CD4-positive, alpha-beta memory T cell (primary cell): ENCODE measurements at regions of chr9 and their contacts with region 1.

Region 1: DNA sequence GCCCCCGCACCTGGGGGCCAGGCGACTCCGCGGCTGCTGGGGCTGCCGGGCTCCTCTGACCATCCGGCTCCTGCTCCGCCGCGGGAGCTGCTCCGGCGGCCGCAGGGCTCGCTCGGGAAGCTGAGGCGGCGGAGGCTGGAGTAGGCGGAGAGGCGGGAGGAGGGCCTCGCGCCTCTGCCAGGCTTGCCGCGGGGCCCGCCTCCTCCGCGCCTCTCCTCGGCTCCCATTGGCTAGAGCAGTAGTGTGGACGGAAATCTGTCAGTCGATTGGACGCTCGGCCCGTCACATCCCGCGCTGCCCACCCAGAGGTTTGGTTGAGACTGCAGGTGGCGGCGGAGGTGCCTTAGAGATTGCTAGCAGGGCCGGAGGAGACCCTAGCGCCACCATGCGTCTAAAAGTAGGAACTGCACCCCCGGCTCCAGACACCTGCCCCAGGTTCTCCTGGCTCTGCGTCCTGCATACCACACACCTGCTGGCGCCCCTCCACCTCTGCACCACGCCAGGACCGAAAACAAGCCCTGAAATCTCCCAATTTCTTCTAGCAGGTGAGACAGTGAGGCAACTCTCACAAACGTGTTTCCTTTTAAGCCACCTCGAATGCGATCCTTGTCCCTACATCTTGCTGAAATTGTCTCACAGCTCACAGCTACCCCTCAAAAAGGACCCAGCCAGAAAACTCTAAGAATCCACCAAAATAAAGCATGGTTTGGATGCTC is at the start of gene SCAI:
- DNase-seq: peak; percentile 97 to 99 (median 99)
- H3K4me3 ChIP-seq: peak within 1 kb of the TSS in 1 of 2 donors; percentile 49
- H3K4me3 Mint-ChIP-seq: peak within 1 kb of the TSS; percentile 93 to 99 (median 98)
- H3K27ac ChIP-seq: peak within 1 kb of the TSS; percentile 16
- H3K27ac Mint-ChIP-seq: peak within 1 kb of the TSS; percentile 85 to 95 (median 91)
- H3K4me1 ChIP-seq: peaks cover 22% of the 10 kb centered on the region
- H3K4me1 Mint-ChIP-seq: peaks cover 17 to 34% (median 26%) of the 10 kb centered on the region in 4 donors
- H3K27me3 ChIP-seq: no peaks in the 10 kb centered on the region
- H3K27me3 Mint-ChIP-seq: no peaks in the 10 kb centered on the region
- total RNA-seq, gene SCAI: 14.7 to 15.5 TPM

Region 2: GRCh38 chr9:125024917-125025316 is 118.6 kb before region 1 on chr9:
- CTCF ChIA-PET with region 1: no interaction called
- POLR2A ChIA-PET with region 1: no interaction called
- intact Hi-C with region 1: loop called (anchors 10 kb)
- DNase-seq: no peak
- H3K4me3 ChIP-seq: no peak overlapping the region
- H3K4me3 Mint-ChIP-seq: no peak overlapping the region
- H3K27ac ChIP-seq: no peak overlapping the region
- H3K27ac Mint-ChIP-seq: peak overlapping the region in 1 of 7 donors; percentile 53
- H3K4me1 ChIP-seq: no peaks in the 10 kb centered on the region
- H3K4me1 Mint-ChIP-seq: no peaks in the 10 kb centered on the region
- H3K27me3 ChIP-seq: no peaks in the 10 kb centered on the region
- H3K27me3 Mint-ChIP-seq: no peaks in the 10 kb centered on the region

Region 3: DNA sequence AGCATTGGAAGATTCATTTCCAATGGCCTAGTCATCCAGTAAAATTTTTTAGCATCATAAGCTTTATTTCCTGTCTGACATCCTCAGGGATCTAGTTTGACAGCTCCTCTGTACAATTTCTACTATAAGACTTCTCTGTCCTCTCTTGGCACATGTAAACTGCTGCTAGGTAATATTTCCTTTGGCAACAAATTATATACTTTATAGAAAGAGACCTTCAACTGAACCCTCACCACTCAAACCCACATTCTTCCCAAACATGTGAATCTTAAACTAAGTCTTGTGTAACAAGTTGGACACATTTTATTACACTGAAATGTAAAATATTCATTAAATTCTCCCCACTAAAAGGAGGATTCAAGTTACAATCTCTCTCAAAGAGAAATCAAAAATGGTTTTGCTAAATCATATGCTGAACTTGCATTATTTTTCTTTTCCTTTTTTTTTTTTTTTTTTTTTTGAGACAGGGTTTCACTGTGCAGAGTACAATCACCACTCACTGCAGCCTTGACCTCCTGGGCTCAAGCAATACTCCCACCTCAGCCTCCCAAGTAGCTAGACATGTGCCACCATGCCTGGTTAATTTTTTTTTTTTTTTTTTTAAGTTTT is 37.1 kb before region 1 on chr9:
- CTCF ChIA-PET with region 1: no interaction called
- POLR2A ChIA-PET with region 1: no interaction called
- intact Hi-C with region 1: no loop called
- DNase-seq: no peak
- H3K4me3 ChIP-seq: no peak overlapping the region
- H3K4me3 Mint-ChIP-seq: no peak overlapping the region
- H3K27ac ChIP-seq: no peak overlapping the region
- H3K27ac Mint-ChIP-seq: no peak overlapping the region
- H3K4me1 ChIP-seq: no peaks in the 10 kb centered on the region
- H3K4me1 Mint-ChIP-seq: peaks cover 0 to 2% (median under 1%) of the 10 kb centered on the region in 4 donors
- H3K27me3 ChIP-seq: no peaks in the 10 kb centered on the region
- H3K27me3 Mint-ChIP-seq: no peaks in the 10 kb centered on the region

Region 4: DNA sequence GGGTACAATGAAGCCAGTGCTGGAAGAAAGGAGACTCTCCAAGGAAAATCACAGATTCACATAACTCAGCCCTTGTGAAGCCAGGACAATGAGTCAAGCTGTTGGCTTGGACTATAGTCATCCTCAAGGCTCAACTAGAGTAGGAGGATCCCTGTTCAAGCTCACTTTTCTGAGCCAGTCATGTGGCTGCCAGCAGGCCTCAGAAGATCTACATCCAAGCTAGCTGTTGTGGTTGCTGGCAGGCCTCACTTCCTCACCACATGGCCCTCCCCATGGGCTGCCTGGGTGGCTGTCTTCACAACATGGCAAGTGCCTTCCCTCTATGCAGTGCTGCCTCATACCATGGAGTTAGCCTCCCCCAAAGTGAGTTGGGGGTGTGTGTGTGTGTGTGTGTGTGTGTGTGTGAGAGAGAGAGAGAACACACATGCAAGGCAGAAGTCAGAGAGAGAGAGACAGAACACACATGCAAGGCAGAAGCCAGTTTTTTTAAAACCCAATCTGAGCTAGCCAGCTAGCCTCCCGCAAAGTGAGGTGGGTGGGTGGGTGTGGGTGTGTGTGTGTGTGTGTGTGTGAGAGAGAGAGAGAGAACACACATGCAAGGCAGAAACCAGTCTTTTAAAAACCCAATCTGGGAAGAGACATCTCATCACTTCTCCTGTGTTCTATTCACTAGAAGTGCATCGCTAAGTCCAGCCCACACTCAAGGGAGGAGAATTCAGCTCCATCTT is 17.4 kb before region 1 on chr9:
- CTCF ChIA-PET with region 1: interaction called, 26 read pairs
- POLR2A ChIA-PET with region 1: interaction called, 25 read pairs
- intact Hi-C with region 1: loop called (anchors 2 kb)
- DNase-seq: peak; percentile 84 to 90 (median 86)
- H3K4me3 ChIP-seq: no peak overlapping the region
- H3K4me3 Mint-ChIP-seq: peak overlapping the region; percentile 63 to 95 (median 81)
- H3K27ac ChIP-seq: no peak overlapping the region
- H3K27ac Mint-ChIP-seq: peak overlapping the region; percentile 88 to 99 (median 94)
- H3K4me1 ChIP-seq: peaks cover 24% of the 10 kb centered on the region
- H3K4me1 Mint-ChIP-seq: peaks cover 24 to 36% (median 30%) of the 10 kb centered on the region in 4 donors
- H3K27me3 ChIP-seq: no peaks in the 10 kb centered on the region
- H3K27me3 Mint-ChIP-seq: peaks cover 0 to 1% of the 10 kb centered on the region in 2 donors